B cell (primary cell): ENCODE measurements at regions of chr4 and their contacts with region 1.

Region 1: GRCh38 chr4:67700738-67701516 is at the start of gene UBA6:
- DNase-seq: peak; percentile 97
- ATAC-seq: peak; percentile 97
- H3K4me3 ChIP-seq: peak within 1 kb of the TSS; percentile 69 to 95 (median 88)
- H3K4me3 Mint-ChIP-seq: peak within 1 kb of the TSS; percentile 92
- H3K27ac ChIP-seq: peak within 1 kb of the TSS; percentile 69 to 88
- H3K27ac Mint-ChIP-seq: peak within 1 kb of the TSS; percentile 95
- H3K4me1 ChIP-seq: peaks cover 18 to 22% of the 10 kb centered on the region in 2 donors
- H3K4me1 Mint-ChIP-seq: peaks cover 57% of the 10 kb centered on the region
- H3K27me3 ChIP-seq: no peaks in the 10 kb centered on the region
- H3K27me3 Mint-ChIP-seq: no peaks in the 10 kb centered on the region
- CTCF ChIP-seq: peak; percentile 65
- total RNA-seq, gene UBA6: 64.0 and 85.6 TPM in 2 replicates

Region 2: DNA sequence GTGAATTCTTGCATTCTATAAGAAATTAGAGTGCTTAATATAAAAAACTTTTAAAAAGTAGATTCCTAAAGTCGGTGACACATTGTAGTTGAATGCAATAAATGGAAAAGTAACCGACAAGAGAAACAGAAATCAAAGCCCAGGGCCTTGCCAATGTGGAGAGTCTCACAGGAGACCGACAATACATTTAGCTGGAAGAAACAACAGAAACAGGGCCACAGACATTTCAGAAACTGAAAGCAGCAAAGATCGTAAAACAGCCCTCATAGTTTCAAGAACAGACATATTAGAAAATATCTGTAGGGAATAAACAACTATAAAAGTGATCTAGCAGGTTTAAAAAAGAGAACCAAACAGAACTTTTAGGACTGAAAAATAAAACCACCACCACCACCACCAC is 92.9 kb before region 1 on chr4:
- CTCF ChIA-PET with region 1: no interaction called
- POLR2A ChIA-PET with region 1: no interaction called
- intact Hi-C with region 1: no loop called
- DNase-seq: no peak
- ATAC-seq: no peak
- H3K4me3 ChIP-seq: no peak overlapping the region
- H3K4me3 Mint-ChIP-seq: no peak overlapping the region
- H3K27ac ChIP-seq: peak overlapping the region in 1 of 2 donors; percentile 3
- H3K27ac Mint-ChIP-seq: peak overlapping the region; percentile 37
- H3K4me1 ChIP-seq: no peaks in the 10 kb centered on the region
- H3K4me1 Mint-ChIP-seq: peaks cover 14% of the 10 kb centered on the region
- H3K27me3 ChIP-seq: no peaks in the 10 kb centered on the region
- H3K27me3 Mint-ChIP-seq: no peaks in the 10 kb centered on the region
- CTCF ChIP-seq: no peak

Region 3: DNA sequence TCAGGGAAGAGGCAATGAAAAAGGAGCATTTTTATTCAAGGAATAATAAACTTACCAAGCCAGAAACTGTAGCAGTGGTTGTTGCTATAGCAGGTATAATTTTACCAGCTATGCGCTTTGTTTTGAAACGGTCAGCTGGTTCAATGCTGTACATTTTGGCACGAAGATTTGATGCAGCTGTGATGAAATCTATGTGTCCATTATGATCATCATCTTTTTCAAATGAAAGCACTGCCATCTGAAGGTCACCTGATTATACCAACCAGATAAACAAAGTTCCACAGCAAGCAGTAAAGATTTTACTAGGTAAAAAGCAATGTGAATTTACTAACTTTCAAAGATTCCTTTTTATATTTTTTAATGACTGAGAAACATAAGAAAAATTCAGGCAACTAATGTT is 76.0 kb before region 1 on chr4:
- CTCF ChIA-PET with region 1: no interaction called
- POLR2A ChIA-PET with region 1: no interaction called
- intact Hi-C with region 1: loop called (anchors 10 kb)
- DNase-seq: no peak
- ATAC-seq: no peak
- H3K4me3 ChIP-seq: no peak overlapping the region
- H3K4me3 Mint-ChIP-seq: no peak overlapping the region
- H3K27ac ChIP-seq: no peak overlapping the region
- H3K27ac Mint-ChIP-seq: no peak overlapping the region
- H3K4me1 ChIP-seq: no peaks in the 10 kb centered on the region
- H3K4me1 Mint-ChIP-seq: no peaks in the 10 kb centered on the region
- H3K27me3 ChIP-seq: no peaks in the 10 kb centered on the region
- H3K27me3 Mint-ChIP-seq: no peaks in the 10 kb centered on the region
- CTCF ChIP-seq: no peak

Region 4: DNA sequence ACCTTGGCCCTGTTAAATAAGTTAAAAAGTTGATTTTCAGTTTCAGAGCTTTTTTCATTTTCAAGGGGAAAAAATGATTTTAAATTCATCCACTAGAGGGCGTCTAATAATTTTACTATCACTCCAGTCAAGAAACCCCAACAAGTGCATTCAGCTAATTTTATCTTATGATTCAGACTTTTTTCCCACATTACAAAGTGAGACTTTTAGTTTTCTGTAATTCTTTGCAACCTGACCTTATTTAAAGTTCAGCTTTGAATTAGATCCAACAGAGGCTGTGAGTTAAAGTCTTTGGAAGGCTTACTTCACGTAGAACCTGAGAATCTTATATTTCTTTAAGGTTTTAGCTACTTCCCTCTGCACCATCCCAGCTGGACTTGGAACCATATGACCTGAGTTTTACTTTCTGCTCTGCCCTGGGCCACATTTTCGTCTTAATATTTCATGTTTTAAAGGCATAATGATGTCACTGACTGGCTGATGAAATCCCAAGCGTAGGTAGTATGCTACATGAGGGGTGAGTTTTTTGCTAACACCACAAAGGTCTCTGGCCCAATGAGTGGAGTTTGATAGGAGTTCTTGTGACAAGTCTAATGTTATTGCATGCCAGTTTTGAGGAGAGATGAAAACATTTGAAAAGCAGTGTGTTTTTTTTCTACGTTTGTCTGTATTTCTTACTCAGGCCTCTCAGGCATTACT is 46.0 kb after region 1 on chr4:
- CTCF ChIA-PET with region 1: interaction called, 21 read pairs
- POLR2A ChIA-PET with region 1: no interaction called
- intact Hi-C with region 1: loop called (anchors 2 kb)
- DNase-seq: peak; percentile 59
- ATAC-seq: peak; percentile 21
- H3K4me3 ChIP-seq: no peak overlapping the region
- H3K4me3 Mint-ChIP-seq: no peak overlapping the region
- H3K27ac ChIP-seq: no peak overlapping the region
- H3K27ac Mint-ChIP-seq: no peak overlapping the region
- H3K4me1 ChIP-seq: no peaks in the 10 kb centered on the region
- H3K4me1 Mint-ChIP-seq: no peaks in the 10 kb centered on the region
- H3K27me3 ChIP-seq: no peaks in the 10 kb centered on the region
- H3K27me3 Mint-ChIP-seq: no peaks in the 10 kb centered on the region
- CTCF ChIP-seq: peak; percentile 90

Region 5: DNA sequence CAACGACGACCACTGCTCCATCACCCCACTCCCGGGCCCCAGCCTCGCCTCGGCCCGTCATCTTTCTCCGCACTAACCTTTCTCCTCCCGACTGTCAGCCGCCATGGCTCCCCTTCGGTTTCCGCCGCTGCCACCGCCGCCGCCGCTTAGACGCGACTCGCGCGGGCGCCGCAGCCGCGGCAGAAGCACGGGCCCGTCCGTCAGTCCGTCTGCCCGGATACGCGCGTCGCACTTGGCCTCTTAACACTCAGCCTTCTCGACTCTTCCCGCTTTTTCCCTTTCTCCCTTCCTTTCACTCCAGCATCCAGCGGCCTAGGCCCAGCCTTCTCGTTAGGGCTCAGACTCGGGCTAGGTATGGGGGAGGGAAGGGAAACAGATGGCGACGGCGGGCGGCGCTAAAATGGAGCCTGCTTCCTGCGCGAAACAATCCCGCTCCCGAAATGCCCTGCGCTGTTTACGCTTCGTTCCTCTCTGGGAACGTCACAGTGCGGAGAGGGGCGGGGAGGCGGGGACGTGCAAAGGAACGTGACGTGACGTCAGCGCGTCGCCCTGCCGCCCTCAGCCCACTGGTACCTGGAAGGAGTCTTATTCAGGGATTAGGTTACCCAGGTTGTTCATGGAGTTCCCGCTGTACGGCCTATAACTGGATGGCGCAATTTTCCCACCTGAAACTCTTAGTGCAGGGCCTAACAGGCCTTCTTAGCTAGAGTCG is 648.9 kb after region 1 on chr4 and contains the start of gene YTHDC1:
- CTCF ChIA-PET with region 1: no interaction called
- POLR2A ChIA-PET with region 1: no interaction called
- intact Hi-C with region 1: loop called (anchors 1 kb)
- DNase-seq: peak; percentile 97
- ATAC-seq: peak; percentile 97
- H3K4me3 ChIP-seq: peak within 1 kb of the TSS; percentile 76 to 99 (median 93)
- H3K4me3 Mint-ChIP-seq: peak within 1 kb of the TSS; percentile 98
- H3K27ac ChIP-seq: peak within 1 kb of the TSS; percentile 91 to 94
- H3K27ac Mint-ChIP-seq: peak within 1 kb of the TSS; percentile 99
- H3K4me1 ChIP-seq: peaks cover 27 to 30% of the 10 kb centered on the region in 2 donors
- H3K4me1 Mint-ChIP-seq: peaks cover 39% of the 10 kb centered on the region
- H3K27me3 ChIP-seq: no peaks in the 10 kb centered on the region
- H3K27me3 Mint-ChIP-seq: no peaks in the 10 kb centered on the region
- CTCF ChIP-seq: no peak
- total RNA-seq, gene YTHDC1: 175 and 179 TPM in 2 replicates